ENCODE measurements at regions of chr12 and their contacts with region 1.

Region 1: GRCh38 chr12:44972746-44973421 is 78.0 kb downstream of the DBX2 start:
- DNase-seq: peak; percentile 43
- ATAC-seq: peak; percentile 74
- H3K4me3 ChIP-seq: no peak overlapping the region
- H3K27ac ChIP-seq: no peak overlapping the region
- H3K4me1 ChIP-seq: no peaks in the 10 kb centered on the region
- H3K27me3 ChIP-seq: peaks cover 31% of the 10 kb centered on the region
- CTCF ChIP-seq: peak; percentile 70

Region 2: DNA sequence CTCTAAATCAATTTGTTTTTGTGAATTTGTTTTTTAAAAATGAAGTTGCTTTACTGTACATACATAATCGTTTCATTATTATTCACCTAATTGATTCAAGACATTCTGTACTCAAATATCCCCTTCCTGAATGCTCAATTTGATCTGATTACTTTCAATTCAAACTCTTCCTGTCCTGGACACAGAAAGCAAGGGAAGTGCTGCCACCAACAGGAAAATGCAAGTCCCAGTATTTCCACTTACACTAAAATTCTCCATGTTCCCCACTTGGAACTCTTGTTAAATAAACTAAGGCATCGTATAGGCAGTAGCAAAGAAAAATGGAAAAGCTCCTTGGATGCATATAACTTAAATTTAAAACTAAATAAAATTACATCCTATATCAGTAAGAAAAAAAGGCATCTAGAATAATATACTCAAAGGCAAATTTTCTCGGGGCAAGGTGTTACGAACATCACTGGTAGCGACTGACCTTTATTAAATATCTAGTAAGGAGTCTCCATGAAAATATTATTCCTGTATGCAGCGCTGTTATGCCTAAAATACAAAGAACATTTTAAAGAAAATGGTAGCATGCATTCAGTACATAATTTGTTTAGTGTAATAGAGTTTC is 150.0 kb after region 1 on chr12:
- CTCF ChIA-PET with region 1: interaction called, 6 read pairs
- POLR2A ChIA-PET with region 1: no interaction called
- intact Hi-C with region 1: loop called (anchors 1 kb)
- DNase-seq: peak; percentile 49
- ATAC-seq: peak; percentile 56
- H3K4me3 ChIP-seq: no peak overlapping the region
- H3K27ac ChIP-seq: no peak overlapping the region
- H3K4me1 ChIP-seq: no peaks in the 10 kb centered on the region
- H3K27me3 ChIP-seq: 0 out of 2 replicates have a peak, but pooled peaks cover 1% of the 10 kb centered on the region
- CTCF ChIP-seq: peak; percentile 77

Region 3: GRCh38 chr12:45223868-45224267 is 251.0 kb after region 1 on chr12:
- CTCF ChIA-PET with region 1: no interaction called
- POLR2A ChIA-PET with region 1: no interaction called
- intact Hi-C with region 1: no loop called
- DNase-seq: no peak
- ATAC-seq: no peak
- H3K4me3 ChIP-seq: no peak overlapping the region
- H3K27ac ChIP-seq: no peak overlapping the region
- H3K4me1 ChIP-seq: peaks cover 14% of the 10 kb centered on the region
- H3K27me3 ChIP-seq: no peaks in the 10 kb centered on the region
- CTCF ChIP-seq: no peak